ENCODE measurements at regions of chr20 and their contacts with region 1.

Region 1: DNA sequence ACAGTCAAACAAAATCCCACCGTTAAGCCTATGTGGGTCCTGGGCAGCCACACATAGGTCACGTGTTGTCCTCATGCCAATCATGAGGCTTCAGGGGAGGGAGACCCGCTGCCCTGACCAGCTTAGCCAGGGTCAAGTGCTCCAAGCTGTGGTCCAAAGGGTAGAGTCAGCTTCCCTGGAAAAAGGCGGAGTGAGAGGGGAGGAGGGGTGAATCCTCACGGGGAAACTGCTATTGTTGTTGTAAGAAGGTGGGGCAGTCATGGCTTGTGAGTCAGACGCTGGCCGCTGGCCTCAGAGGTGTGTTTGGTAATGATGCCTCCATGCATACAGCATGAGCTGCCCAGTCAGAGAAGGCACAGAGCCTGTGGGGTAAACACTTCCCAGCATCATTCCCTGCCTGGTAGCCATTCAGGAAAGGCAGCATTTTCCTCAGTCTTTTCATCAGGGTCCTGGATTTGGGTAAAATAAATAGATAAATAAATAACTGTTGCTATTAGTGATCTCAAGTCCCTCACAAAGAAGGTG is 8.7 kb downstream of the CST3 start:
- DNase-seq: peak in 1 of 2 donors; percentile 71
- H3K4me3 ChIP-seq: no peak overlapping the region
- CTCF ChIP-seq: no peak
- POLR2A ChIP-seq: no peak

Region 2: DNA sequence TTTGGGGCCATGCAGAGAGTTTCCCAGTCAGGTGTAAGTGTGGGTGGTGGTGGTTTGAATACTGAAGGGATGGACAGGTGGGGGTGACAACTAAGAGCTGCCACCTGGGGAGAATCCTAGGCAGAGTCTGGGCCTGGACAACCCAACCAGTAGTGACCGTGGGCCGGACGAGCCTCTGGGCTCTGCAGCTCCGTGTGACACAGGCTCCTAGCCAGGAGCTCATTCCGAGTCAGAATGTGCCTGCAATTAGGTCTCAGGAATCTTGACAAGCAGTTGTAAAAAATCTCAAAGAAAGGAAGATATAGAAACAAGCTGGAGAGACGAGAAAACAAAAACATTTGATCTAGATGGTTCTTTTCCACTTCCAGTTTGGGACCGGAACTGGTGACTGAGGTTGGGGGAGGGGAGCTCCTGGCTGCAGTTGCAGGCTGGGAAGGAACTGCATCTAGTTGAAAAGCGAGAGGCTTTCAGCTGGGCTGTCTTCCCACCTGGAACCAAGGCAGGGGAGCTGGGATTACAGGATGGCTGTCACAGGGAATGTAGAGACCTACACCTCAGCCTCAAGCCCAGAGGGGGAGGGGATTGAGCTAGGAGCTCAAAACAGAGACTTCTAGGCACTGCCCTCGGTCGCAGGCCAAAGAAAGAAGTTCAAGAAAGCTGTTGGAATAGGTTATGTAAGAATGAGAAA is 1766.7 kb before region 1 on chr20:
- intact Hi-C with region 1: loop called (anchors 5 kb)
- DNase-seq: no peak
- H3K4me3 ChIP-seq: no peak overlapping the region
- CTCF ChIP-seq: no peak
- POLR2A ChIP-seq: no peak

Region 3: DNA sequence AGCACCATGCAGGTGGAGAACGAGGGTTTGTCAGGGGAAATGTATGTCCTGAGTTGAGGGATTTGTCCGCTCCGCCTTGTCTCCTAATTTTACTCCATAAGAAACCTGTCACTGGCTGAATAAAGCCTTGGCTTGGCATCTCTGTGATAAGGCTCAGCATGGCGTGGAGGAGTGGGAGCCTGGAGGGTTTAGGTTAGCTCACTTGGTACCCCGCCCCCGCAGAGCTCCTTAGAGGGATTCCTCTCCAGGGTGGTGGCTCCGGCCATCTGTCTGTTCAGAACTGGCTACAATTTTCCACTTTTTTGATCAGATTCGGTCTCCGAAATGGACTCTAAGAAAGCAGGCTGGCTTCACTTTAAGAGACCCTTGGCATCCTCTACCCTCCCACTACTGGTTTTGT is 648.1 kb after region 1 on chr20:
- intact Hi-C with region 1: no loop called
- DNase-seq: no peak
- H3K4me3 ChIP-seq: no peak overlapping the region
- CTCF ChIP-seq: no peak
- POLR2A ChIP-seq: no peak

Measured in lower leg skin (tissue), 4 donors.